GM12878 (cell line): ENCODE measurements at regions of chr7 and their contacts with region 1.

Region 1: GRCh38 chr7:29285444-29285793 is 90.8 kb downstream of the CHN2 start:
- DNase-seq: peak; percentile 55
- ATAC-seq: peak; percentile 70
- H3K4me3 ChIP-seq: no peak overlapping the region
- H3K27ac ChIP-seq: no peak overlapping the region
- H3K4me1 ChIP-seq: peaks cover 17% of the 10 kb centered on the region
- H3K27me3 ChIP-seq: peaks cover 0 to 9% of the 10 kb centered on the region in 2 experiments; a peak in 1 of 4 replicates
- CTCF ChIP-seq: no peak
- EP300 ChIP-seq: peak; percentile 88; a peak in 3 of 4 replicates
- POLR2A ChIP-seq: no peak
- RAD21 ChIP-seq: no peak

Region 2: DNA sequence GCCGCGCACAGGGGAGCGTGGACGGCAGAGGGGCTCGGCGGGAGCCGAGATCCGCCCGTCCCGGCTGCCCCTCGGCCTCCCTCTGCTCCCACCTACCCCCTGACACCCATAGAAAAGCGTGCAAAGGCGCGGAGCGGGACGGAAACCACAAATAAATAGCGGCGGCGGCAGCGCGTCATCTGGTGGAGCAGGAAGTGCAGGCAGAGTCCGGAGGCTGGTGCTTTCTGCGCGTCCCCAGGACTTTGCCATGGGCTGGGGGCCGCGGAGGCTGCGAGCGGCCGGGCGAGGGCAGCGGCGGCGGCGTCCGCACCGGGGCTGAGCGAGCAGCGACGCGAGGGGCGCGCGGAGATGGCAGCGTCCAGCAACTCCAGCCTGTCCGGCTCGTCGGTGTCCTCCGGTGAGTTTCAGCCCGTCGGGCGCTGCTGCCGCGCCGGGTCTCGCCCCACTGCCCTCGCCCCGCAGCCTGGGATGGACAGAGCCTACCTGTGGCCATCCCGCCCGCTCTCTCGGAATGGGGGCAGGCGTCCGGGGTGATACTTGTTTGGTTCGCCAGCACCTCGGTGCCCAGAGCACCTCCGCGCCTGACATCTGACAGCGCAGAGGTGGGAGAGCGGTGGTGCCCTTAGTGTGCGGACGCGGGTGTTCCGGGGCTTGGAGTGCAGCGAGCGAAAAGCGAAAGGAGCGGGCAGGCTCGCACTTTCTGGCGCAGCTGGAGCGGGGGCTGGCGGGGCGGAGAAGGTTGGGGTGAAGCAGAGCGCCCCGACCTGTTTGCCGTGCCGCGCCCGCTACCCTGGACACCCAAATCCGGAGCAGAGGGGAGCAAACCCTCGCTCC is 90.6 kb before region 1 on chr7 and contains the start of gene CHN2:
- CTCF ChIA-PET with region 1: interaction called, 4 read pairs
- POLR2A ChIA-PET with region 1: no interaction called
- RAD21 ChIA-PET with region 1: no interaction called
- SMC1A ChIA-PET with region 1: no interaction called
- in situ Hi-C with region 1: no loop called
- intact Hi-C with region 1: loop called (anchors 5 kb)
- DNase-seq: no peak
- ATAC-seq: peak; percentile 73
- H3K4me3 ChIP-seq: 0 out of 2 replicates have a peak within 1 kb of the TSS, but pooled peaks have one; percentile 34
- H3K27ac ChIP-seq: no peak within 1 kb of the TSS
- H3K4me1 ChIP-seq: no peaks in the 10 kb centered on the region
- H3K27me3 ChIP-seq: peaks cover 3 to 17% of the 10 kb centered on the region in 2 experiments
- CTCF ChIP-seq: no peak
- EP300 ChIP-seq: no peak
- POLR2A ChIP-seq: no peak
- RAD21 ChIP-seq: no peak
- polyA plus RNA-seq, gene CHN2: 0.11 TPM in 1 of 2 experiments, not detected in the other